Prostate gland (tissue), 2 donors: ENCODE measurements at regions of chr7 and their contacts with region 1.

Region 1: DNA sequence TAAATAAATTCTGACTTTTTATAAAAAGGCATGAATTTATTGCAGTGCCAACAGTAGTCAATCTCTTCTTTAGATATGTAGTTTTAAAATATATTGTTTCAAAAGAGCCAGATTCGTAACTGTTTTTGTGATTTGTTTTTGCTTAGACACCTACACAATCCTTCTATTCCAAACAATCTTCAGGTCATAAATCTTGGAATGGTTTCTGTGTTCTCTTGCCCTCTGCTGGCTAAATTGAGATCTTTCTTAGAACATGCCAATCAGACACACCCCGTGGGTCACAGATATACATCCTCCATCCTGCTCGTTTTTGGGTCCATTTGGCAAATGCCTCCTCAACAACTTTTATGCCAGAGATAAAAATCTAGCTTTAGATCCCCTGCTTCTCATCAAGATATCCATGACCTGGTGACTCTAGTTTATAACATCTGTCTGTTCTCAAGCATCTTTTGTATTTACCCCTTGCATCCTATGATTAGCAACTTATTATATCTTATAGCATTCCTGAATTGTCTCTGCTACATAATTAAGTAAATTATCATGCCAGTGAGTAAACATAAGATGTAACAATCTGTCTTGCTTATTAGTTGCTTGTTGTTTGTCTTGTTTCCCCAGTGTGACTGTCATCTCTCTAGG is 35.3 kb upstream of the IFRD1 start:
- DNase-seq: no peak
- H3K4me3 ChIP-seq: no peak overlapping the region
- H3K27ac ChIP-seq: no peak overlapping the region
- H3K4me1 ChIP-seq: no peaks in the 10 kb centered on the region
- H3K27me3 ChIP-seq: no peaks in the 10 kb centered on the region
- CTCF ChIP-seq: peak; percentile 29 to 65 (median 50)
- POLR2A ChIP-seq: no peak

Region 2: GRCh38 chr7:111741811-111742240 is 673.1 kb before region 1 on chr7:
- intact Hi-C with region 1: loop called (anchors 5 kb)
- DNase-seq: peak; percentile 65
- H3K4me3 ChIP-seq: no peak overlapping the region
- H3K27ac ChIP-seq: no peak overlapping the region
- H3K4me1 ChIP-seq: peaks cover 4% of the 10 kb centered on the region
- H3K27me3 ChIP-seq: no peaks in the 10 kb centered on the region
- CTCF ChIP-seq: peak in 3 of 4 experiments; percentile 60 to 73 (median 65)
- POLR2A ChIP-seq: no peak

Region 3: GRCh38 chr7:111763221-111763801 is 651.7 kb before region 1 on chr7:
- intact Hi-C with region 1: loop called (anchors 5 kb)
- DNase-seq: no peak
- H3K4me3 ChIP-seq: no peak overlapping the region
- H3K27ac ChIP-seq: no peak overlapping the region
- H3K4me1 ChIP-seq: no peaks in the 10 kb centered on the region
- H3K27me3 ChIP-seq: no peaks in the 10 kb centered on the region
- CTCF ChIP-seq: peak; percentile 23 to 68 (median 50)
- POLR2A ChIP-seq: no peak

Region 4: DNA sequence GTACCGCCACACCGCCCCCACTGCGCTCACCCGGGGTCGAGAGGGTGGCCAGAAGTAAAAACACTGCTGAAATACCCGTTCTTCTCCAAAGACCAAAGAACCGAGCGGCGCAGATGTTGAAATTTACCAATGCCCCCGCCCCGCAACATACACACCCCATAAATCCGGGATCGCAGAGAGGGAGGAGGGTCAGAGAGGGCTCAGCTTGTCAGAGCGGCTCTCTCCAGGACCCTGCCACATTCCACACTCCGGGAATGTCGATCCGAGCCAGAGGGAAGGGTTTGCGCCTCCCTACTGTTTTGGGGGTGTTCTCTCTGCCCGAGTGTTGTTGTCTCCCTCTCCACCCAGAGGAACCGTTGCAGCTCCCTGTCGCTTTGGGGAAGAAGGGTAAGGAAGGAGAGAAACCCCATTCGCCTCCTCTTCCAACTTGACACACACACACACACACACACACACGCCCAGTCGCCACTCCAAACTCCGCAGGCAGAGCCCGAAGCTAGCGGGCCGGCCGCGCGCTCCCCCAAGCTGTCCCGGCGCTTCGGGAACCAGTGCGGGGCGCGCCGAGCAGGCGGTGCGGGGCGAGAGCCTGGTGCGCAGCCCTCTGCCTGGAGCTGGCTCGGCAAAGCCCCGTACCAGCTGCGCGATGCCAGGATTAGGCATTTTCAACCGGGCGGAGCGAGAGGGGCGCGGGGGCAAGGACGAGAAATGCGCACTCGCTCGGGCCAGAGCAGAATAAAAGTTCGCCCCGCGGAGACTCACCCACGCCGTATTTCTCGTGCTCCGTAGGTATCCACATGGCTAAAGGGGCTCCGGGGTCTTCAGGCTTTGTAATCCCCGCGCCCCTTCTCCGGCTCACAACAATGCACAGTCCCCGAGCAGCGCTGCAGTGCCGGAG is 209.4 kb before region 1 on chr7:
- intact Hi-C with region 1: no loop called
- DNase-seq: peak; percentile 46
- H3K4me3 ChIP-seq: peak overlapping the region; percentile 81 to 90
- H3K27ac ChIP-seq: peak overlapping the region; percentile 82 to 83
- H3K4me1 ChIP-seq: no peaks in the 10 kb centered on the region
- H3K27me3 ChIP-seq: no peaks in the 10 kb centered on the region
- CTCF ChIP-seq: no peak
- POLR2A ChIP-seq: no peak